Heart right ventricle (tissue), 16 donors: ENCODE measurements at regions of chr15 and their contacts with region 1.

Region 1: DNA sequence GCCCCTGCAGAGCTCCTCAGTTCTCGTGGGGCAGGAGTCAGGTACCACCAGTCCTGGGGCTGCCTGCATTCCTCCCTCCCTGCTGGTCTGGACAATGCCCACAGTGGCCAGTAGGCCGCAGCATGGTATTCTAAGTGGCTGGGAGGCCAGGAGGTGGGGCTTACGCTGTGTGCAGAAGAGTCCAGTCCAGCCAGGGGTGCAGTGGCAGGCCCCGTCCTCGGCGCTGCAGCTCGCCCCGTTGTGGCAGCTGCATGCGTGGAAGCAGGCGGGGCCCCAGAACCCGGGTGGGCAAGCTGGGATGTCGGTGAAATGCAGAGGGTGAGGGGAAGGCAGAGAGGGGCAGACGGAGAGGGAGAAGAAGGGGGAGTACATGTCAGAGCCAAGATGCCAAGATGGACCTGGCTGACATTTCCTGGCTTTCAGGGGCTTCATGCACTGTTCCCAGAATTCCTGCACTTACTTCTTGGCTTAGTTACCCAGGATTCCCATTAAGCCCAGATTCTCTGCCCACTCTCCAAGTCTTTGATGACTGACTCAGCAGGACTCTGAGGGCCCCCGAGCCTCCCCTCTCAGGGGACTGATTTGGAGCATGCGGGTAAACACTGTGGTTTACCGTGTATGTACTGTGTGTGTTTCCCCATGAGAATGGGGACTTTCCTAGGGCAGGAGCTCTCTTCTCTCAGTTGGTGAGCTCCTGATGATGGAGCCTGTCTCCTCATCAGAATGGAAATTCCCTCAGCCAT is 47.5 kb downstream of the RAB11A start:
- DNase-seq: peak; percentile 41 to 44
- ATAC-seq: peak; percentile 82 to 93 (median 90)
- H3K4me3 ChIP-seq: no peak overlapping the region
- H3K27ac ChIP-seq: no peak overlapping the region
- H3K4me1 ChIP-seq: peaks cover 0 to 21% (median 10%) of the 10 kb centered on the region in 9 donors
- H3K27me3 ChIP-seq: no peaks in the 10 kb centered on the region
- CTCF ChIP-seq: peak; percentile 31 to 71 (median 62)

Region 2: GRCh38 chr15:65818927-65819562 is 97.8 kb before region 1 on chr15:
- intact Hi-C with region 1: no loop called
- DNase-seq: no peak
- ATAC-seq: peak in 7 of 8 donors; percentile 33 to 75 (median 64)
- H3K4me3 ChIP-seq: no peak overlapping the region
- H3K27ac ChIP-seq: peak overlapping the region in 3 of 10 donors; percentile 16 to 79 (median 25)
- H3K4me1 ChIP-seq: peaks cover 0 to 35% (median 2%) of the 10 kb centered on the region in 9 donors
- H3K27me3 ChIP-seq: no peaks in the 10 kb centered on the region
- CTCF ChIP-seq: no peak

Region 3: DNA sequence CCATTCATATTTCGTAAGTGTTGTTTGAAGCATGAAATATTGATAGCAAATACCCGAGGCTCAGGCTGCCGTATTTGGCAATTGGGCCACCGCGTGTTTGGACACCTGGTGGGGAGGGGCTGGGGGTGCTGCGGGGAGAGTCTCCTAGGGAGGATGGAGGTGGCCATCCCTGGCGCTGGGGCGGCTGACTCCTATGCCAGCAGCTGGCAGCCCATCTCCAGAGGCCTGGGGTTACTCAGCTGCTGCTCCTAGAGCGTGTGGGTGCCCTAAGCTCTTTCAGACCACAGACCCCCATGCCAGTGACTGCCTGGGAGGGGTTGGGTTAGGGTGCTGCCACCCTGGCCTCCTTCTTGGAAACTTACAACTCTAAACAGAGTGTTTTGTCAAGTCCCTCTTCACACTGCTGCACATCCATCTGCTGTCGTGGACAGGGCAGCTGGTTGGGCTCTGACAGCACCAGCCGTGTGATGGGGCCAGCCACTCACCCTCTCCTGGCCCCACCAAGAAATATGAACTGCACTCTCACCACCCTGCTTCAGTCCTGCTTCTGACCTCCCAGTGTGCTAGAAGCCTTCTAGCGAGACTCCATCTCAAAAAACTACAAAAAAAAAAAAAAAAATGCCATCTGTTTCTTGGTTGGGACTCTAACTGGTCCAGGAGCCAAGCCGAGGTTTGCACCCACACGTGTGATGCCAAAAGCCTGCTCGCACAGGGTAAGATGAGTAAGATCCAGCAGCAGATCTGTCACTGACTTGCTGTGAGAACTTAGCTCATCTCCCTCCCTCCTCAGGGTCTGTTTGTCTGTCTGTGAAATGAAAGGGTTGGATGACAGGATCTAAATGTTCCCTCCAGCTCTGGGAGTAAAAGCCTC is 180.6 kb after region 1 on chr15:
- intact Hi-C with region 1: no loop called
- DNase-seq: no peak
- ATAC-seq: peak in 4 of 8 donors; percentile 16 to 57 (median 37)
- H3K4me3 ChIP-seq: no peak overlapping the region
- H3K27ac ChIP-seq: no peak overlapping the region
- H3K4me1 ChIP-seq: no peaks in the 10 kb centered on the region
- H3K27me3 ChIP-seq: peaks cover 0 to 7% (median 0%) of the 10 kb centered on the region in 7 donors
- CTCF ChIP-seq: no peak

Region 4: DNA sequence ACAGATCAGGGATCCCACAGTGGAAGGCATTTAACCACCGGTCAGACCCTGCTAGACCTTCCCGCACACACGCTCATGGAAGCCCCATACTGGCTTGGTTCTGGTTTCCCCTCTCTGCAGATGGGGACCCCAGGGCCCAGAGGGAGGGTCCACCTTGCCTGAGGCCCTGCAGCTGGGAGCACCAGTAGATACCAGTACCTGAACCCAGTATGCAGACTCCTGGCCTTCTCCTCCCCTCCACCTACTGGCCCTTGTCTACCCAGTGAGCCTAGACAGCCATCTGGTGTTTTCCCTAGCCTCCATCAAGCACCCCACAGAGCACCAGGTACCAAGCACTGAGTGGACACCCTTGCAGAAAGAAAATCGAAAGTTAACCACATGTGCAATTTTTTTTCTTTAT is 271.6 kb after region 1 on chr15:
- intact Hi-C with region 1: loop called in 2 of 10 experiments (anchors 5 to 10 kb)
- DNase-seq: no peak
- ATAC-seq: peak in 2 of 8 donors; percentile 45 to 51
- H3K4me3 ChIP-seq: no peak overlapping the region
- H3K27ac ChIP-seq: no peak overlapping the region
- H3K4me1 ChIP-seq: no peaks in the 10 kb centered on the region
- H3K27me3 ChIP-seq: peaks cover 0 to 46% (median 31%) of the 10 kb centered on the region in 7 donors
- CTCF ChIP-seq: peak in 2 of 9 donors; percentile 6 to 24

Region 5: DNA sequence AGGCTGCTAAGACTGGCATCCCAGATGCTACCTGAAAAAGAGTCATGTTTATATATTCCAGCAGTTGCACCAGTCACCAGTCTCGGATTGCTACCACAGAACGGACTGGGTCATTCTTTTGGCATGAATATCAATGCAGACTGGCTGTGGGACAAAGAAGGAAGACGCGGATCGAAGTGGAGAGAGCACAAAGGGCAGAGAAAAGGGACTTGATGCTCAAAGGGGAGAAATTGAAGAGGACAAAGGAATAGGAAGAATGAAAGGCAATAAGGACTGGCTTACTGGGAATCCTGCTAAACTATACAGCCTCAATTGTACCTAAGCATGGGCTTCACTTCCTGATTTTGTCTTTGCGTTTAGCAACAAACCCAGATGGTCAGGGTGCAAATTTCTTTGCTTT is 361.2 kb after region 1 on chr15:
- intact Hi-C with region 1: loop called in 6 of 10 experiments (anchors 5 to 10 kb)
- DNase-seq: no peak
- ATAC-seq: no peak
- H3K4me3 ChIP-seq: no peak overlapping the region
- H3K27ac ChIP-seq: no peak overlapping the region
- H3K4me1 ChIP-seq: no peaks in the 10 kb centered on the region
- H3K27me3 ChIP-seq: peaks cover 0 to 5% (median 0%) of the 10 kb centered on the region in 7 donors
- CTCF ChIP-seq: no peak

Region 6: GRCh38 chr15:66287461-66288057 is 370.7 kb after region 1 on chr15:
- intact Hi-C with region 1: loop called in 8 of 10 experiments (anchors 5 to 10 kb)
- DNase-seq: no peak
- ATAC-seq: no peak
- H3K4me3 ChIP-seq: no peak overlapping the region
- H3K27ac ChIP-seq: no peak overlapping the region
- H3K4me1 ChIP-seq: peaks cover 0 to 13% (median 5%) of the 10 kb centered on the region in 9 donors
- H3K27me3 ChIP-seq: no peaks in the 10 kb centered on the region
- CTCF ChIP-seq: peak; percentile 44 to 75 (median 66)